CD8-positive, alpha-beta memory T cell (primary cell): ENCODE measurements at regions of chr16 and their contacts with region 1.

Region 1: DNA sequence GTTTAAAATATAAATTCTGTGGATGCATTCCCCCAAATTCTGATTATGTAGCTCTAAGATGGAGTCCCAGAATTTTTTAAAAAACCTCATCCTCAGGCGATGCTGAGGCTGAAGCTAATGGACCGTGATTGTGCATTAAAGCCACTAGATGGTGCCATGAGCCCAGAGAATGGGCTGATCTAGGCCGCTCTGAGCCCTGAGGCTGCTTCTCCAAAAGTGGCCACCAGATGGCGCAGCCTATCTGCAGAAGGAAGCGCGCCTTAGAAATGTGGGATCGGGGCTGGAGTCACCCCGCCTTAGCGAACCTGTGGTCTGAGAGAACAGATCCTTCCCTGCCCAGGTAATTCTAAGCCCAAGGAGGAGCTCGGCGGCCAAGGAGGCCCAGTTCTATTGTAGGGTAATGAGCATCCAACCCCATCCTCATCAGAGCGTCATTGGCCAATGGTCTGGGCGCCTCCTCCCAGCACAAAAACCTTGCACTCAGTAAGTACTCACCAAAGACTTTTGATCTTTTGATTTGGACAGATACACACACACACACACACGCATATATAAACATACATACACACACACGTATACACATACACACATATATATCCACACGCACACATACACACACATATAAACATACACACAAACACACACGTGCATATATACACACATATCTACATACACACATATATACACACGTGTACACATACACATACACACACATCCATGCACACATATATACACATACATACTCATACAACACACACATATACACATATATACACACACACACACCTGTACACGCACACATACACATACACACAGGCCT is 13.7 kb upstream of the MMP2 start:
- DNase-seq: peak; percentile 57 to 82 (median 68)
- H3K4me3 ChIP-seq: no peak overlapping the region
- H3K4me3 Mint-ChIP-seq: no peak overlapping the region
- H3K27ac ChIP-seq: no peak overlapping the region
- H3K27ac Mint-ChIP-seq: no peak overlapping the region
- H3K4me1 ChIP-seq: no peaks in the 10 kb centered on the region
- H3K4me1 Mint-ChIP-seq: peaks cover 0 to 4% (median 2%) of the 10 kb centered on the region in 3 donors
- H3K27me3 ChIP-seq: no peaks in the 10 kb centered on the region
- H3K27me3 Mint-ChIP-seq: peaks cover 3 to 5% of the 10 kb centered on the region in 2 donors

Region 2: DNA sequence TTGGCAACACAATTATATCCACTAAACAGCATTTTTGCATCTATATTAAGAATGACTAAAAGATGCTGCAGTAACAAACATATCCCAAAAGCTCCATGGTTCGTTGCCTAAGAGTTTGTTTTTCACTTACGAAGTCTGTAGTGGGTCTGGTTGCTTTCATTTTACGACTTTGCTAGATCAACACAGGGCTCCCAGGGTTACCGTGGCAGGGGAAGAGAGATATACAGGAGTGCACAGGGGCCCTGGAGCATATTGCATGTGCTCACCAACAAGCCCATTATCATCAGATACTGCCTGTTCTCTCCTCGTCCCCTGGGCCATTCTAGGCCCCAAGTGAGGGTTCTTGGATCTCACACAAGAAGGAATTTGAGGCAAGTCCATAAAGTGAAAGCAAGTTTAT is 10.6 kb after region 1 on chr16:
- CTCF ChIA-PET with region 1: interaction called, 13 read pairs
- POLR2A ChIA-PET with region 1: no interaction called
- DNase-seq: no peak
- H3K4me3 ChIP-seq: no peak overlapping the region
- H3K4me3 Mint-ChIP-seq: no peak overlapping the region
- H3K27ac ChIP-seq: no peak overlapping the region
- H3K27ac Mint-ChIP-seq: no peak overlapping the region
- H3K4me1 ChIP-seq: no peaks in the 10 kb centered on the region
- H3K4me1 Mint-ChIP-seq: no peaks in the 10 kb centered on the region
- H3K27me3 ChIP-seq: no peaks in the 10 kb centered on the region
- H3K27me3 Mint-ChIP-seq: peaks cover 23 to 38% of the 10 kb centered on the region in 2 donors